ENCODE measurements at regions of chr12 and their contacts with region 1.

Region 1: GRCh38 chr12:12008931-12009611 is 61.7 kb upstream of the BCL2L14 start:
- DNase-seq: peak; percentile 56
- H3K4me3 Mint-ChIP-seq: peak overlapping the region; percentile 73
- H3K27ac Mint-ChIP-seq: peak overlapping the region; percentile 97
- H3K4me1 Mint-ChIP-seq: peaks cover 88% of the 10 kb centered on the region
- H3K27me3 Mint-ChIP-seq: peaks cover 1% of the 10 kb centered on the region

Region 2: DNA sequence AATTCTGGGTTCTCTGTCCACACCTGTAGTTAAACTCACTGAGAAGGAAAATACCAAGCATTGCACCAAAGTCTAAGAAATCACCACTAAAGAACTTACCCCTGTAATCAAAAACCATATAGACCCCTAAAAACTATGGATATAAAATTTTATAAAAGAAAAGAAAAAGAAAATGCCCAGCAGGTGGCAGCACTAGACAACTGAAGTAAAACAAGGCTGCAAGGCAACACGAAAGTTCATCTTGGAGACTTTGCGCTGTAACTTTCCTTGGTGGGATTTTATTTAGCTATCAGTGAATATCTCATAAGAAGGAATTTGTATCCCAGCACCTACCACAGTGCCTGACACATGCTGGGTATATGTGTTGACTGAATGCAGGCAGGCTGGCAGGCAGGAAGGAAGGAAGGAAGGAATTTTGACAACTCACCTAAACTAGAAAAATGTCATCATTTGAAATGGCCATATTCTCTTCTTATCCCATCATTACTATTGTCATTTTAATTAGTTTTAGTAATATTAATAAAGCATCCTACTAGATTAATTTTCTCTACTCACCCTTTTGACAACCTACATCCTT is 427.8 kb before region 1 on chr12:
- intact Hi-C with region 1: loop called (anchors 1 kb)
- DNase-seq: peak; percentile 20
- H3K4me3 Mint-ChIP-seq: peak overlapping the region; percentile 59
- H3K27ac Mint-ChIP-seq: peak overlapping the region; percentile 80
- H3K4me1 Mint-ChIP-seq: peaks cover 24% of the 10 kb centered on the region
- H3K27me3 Mint-ChIP-seq: peaks cover 7% of the 10 kb centered on the region

Region 3: GRCh38 chr12:11771356-11771755 is 237.7 kb before region 1 on chr12:
- intact Hi-C with region 1: loop called (anchors 1 kb)
- DNase-seq: no peak
- H3K4me3 Mint-ChIP-seq: no peak overlapping the region
- H3K27ac Mint-ChIP-seq: peak overlapping the region; percentile 98
- H3K4me1 Mint-ChIP-seq: peaks cover 96% of the 10 kb centered on the region
- H3K27me3 Mint-ChIP-seq: no peaks in the 10 kb centered on the region

Region 4: GRCh38 chr12:11875414-11875935 is 133.6 kb before region 1 on chr12:
- intact Hi-C with region 1: loop called (anchors 1 kb)
- DNase-seq: no peak
- H3K4me3 Mint-ChIP-seq: peak overlapping the region; percentile 9
- H3K27ac Mint-ChIP-seq: peak overlapping the region; percentile 61
- H3K4me1 Mint-ChIP-seq: peaks cover 73% of the 10 kb centered on the region
- H3K27me3 Mint-ChIP-seq: no peaks in the 10 kb centered on the region

Region 5: DNA sequence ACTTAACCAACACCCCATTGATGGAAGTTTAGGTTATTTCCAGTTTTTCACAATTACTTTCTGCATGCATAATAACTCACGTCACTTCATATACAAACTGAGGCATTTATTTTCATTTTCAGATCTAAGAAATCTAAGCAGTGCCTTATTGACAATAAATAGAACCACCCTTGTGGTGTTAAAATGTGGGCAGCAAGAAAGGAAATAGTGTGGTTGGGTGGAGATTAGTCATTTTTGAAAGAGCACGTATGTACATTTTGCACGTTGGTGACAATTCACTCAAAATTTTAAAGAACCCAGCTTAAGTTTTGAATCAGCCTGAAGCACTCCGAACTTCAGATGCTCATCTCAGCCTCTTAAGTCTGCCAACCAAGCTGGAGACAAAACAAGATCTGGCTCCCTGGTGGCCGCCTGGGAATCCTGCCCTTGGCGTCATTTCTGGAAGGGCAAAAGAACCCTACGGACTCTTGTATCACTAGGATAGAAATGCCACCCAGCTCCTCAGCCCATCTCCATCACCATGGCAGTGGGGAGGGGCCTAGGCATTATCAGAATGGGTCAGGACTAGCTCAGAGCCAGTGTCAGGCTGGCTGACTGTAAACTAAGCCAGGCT is 27.8 kb before region 1 on chr12:
- intact Hi-C with region 1: loop called (anchors 1 kb)
- DNase-seq: peak; percentile 73
- H3K4me3 Mint-ChIP-seq: peak overlapping the region; percentile 36
- H3K27ac Mint-ChIP-seq: peak overlapping the region; percentile 96
- H3K4me1 Mint-ChIP-seq: peaks cover 62% of the 10 kb centered on the region
- H3K27me3 Mint-ChIP-seq: no peaks in the 10 kb centered on the region

Region 6: GRCh38 chr12:12070674-12071656 is 61.9 kb after region 1 on chr12 and contains the start of gene BCL2L14:
- intact Hi-C with region 1: loop called (anchors 2 kb)
- DNase-seq: peak; percentile 8
- H3K4me3 Mint-ChIP-seq: peak within 1 kb of the TSS; percentile 88
- H3K27ac Mint-ChIP-seq: peak within 1 kb of the TSS; percentile 94
- H3K4me1 Mint-ChIP-seq: peaks cover 49% of the 10 kb centered on the region
- H3K27me3 Mint-ChIP-seq: peaks cover 3% of the 10 kb centered on the region
- total RNA-seq, gene BCL2L14: 10.4 and 11.0 TPM in 2 replicates

Region 7: DNA sequence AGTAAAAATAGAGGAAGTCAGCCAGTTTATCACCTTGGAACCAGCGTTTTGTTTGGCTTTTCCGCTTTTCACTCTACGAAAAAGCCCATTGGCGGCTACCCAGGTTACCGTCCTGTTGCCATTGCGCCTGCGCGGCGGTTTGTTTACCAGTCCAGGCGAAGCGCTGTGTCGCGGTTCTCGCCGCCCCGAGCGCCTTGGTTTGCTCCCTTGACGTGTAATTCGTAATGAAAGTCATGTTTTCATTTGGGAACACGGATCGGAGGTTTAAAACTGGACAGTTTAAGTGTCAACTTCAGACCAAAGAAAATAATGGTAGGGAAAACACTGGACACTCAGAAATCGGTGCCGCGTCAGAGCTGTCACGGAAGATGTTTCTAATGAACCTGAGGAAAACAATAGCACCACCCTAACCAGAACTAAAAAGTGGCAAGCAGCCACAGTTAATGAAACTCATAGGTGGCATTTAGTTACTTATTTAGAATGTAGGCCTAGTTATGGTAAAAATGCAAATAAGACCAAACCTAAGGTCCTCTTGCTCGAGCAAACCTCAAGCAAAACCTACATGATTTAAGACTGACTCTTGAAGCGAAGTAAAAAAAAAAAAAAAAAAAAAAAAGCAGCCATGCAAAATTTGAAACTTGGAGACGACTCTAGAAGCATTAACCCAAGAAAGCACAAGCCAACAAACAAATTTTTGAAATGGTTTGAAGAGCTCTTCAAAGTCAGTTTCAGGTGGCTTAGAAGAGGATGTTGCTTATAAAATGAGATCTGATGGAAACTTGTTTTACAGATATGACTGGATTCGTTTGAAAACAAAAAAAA is 687.7 kb after region 1 on chr12:
- intact Hi-C with region 1: loop called (anchors 2 kb)
- DNase-seq: peak; percentile 91
- H3K4me3 Mint-ChIP-seq: peak overlapping the region; percentile 96
- H3K27ac Mint-ChIP-seq: peak overlapping the region; percentile 89
- H3K4me1 Mint-ChIP-seq: peaks cover 49% of the 10 kb centered on the region
- H3K27me3 Mint-ChIP-seq: no peaks in the 10 kb centered on the region

Measured in activated T-helper 1 cell treated with anti-CD3 and anti-CD28 coated beads, Interleukin-12 subunit alpha, Interleukin-12 subunit beta, Interleukin-2, Interleukin-4 antibody, amounts not matched to agents 30 ng/mL and 10 ng/mL and 1 ng/mL, durations not matched to agents 14 hours and 24 hours and 36 hours (primary cell).